CD8-positive, alpha-beta T cell (primary cell): ENCODE measurements at regions of chr1 and their contacts with region 1.

Region 1: GRCh38 chr1:44029906-44030604 is 1.2 kb downstream of the SLC6A9 start:
- DNase-seq: peak; percentile 57 to 90 (median 85)
- ATAC-seq: peak; percentile 78
- H3K4me3 ChIP-seq: peak overlapping the region; percentile 64 to 76
- H3K4me3 Mint-ChIP-seq: peak overlapping the region; percentile 97
- H3K27ac ChIP-seq: peak overlapping the region; percentile 51 to 60
- H3K27ac Mint-ChIP-seq: peak overlapping the region; percentile 95
- H3K4me1 ChIP-seq: peaks cover 12% of the 10 kb centered on the region
- H3K4me1 Mint-ChIP-seq: peaks cover 20% of the 10 kb centered on the region
- H3K27me3 ChIP-seq: no peaks in the 10 kb centered on the region
- H3K27me3 Mint-ChIP-seq: no peaks in the 10 kb centered on the region
- CTCF ChIP-seq: no peak

Region 2: DNA sequence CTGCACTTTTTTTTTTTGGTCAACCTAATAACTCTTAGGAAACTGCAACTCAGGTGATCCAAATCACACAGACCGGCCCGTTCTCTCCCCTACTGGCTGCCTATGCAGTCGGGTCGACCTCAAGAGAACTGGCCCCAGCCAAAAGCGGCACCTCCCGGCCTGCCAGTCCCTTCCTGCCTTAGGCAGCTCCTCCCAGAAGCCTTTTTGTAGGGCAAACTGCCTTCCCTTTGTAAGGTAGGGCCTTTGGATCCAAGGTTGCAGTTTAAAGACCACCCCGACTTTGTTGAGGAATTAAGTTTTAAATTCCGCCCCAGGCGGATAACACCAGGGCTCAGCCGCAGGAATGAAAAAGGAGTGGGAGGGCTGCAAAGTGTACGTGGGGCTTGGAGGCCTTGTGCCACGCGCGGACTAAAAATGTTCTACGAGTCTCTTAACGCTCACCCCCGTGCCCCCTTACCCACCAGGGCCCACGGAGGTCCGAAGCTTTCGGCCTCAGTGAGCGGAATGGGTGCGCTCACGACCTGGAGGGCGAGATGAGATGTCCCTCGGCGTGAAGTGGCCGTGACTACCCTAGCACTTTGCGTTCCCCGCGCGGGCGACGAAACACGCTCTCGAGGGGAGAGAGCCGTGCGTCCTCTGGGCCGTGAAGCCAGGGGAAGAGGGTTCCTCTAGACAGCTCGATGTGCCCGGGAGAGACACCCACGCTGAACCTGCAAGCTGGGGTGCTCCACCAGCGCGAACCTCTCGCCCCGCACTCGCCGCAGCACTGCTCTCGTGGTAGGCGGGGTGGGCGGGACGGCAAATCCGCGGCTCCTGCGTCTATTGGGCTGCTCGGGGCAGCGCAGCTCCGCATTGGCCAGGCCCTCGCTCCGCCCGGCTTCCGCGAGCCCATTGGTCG is 323.2 kb before region 1 on chr1:
- CTCF ChIA-PET with region 1: no interaction called
- POLR2A ChIA-PET with region 1: no interaction called
- intact Hi-C with region 1: loop called in 1 of 2 experiments (anchors 1 kb)
- DNase-seq: peak; percentile 74 to 94 (median 89)
- ATAC-seq: peak; percentile 98
- H3K4me3 ChIP-seq: peak overlapping the region; percentile 80 to 84
- H3K4me3 Mint-ChIP-seq: peak overlapping the region; percentile 87
- H3K27ac ChIP-seq: peak overlapping the region; percentile 46 to 58
- H3K27ac Mint-ChIP-seq: peak overlapping the region; percentile 81
- H3K4me1 ChIP-seq: peaks cover 13% of the 10 kb centered on the region
- H3K4me1 Mint-ChIP-seq: peaks cover 30% of the 10 kb centered on the region
- H3K27me3 ChIP-seq: no peaks in the 10 kb centered on the region
- H3K27me3 Mint-ChIP-seq: no peaks in the 10 kb centered on the region
- CTCF ChIP-seq: no peak

Region 3: DNA sequence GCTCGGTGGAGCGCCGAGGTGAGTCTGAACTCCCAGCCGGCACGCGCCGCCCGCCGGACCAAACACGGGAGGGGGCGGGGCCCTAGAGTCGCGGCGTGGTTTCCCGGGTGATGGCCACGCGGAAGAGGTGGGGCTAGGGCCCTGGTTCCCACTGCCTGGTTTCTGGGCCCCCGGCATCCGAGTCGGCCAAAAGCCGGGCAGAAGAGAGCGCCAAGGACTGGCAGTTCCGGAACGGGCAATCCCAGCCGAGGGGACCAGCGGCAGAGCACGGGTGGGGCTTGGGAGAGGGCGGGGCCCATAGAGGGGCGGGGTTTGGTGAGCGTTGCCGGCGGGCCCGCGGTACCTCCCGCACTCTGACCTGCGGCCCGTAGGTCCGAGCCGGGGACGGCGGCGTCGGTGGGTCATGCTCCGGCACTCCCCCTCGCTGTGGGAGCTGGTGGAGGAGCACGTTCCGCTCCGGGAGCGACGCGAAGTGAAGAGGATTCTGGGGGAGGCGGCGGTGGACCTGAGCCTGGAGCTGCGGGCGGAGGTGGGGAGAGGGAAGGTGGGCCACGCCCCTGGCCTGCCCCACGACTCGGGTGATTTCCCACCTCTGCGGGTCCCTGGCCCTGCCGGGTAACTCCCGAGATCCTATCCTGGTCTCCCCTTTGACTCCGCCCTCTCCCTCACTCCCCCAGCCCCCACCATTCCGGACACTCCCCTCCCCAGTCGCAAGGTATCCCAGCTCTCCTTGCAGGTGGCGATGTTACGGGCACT is 38.4 kb before region 1 on chr1 and contains the start of gene CCDC24:
- CTCF ChIA-PET with region 1: interaction called, 3 read pairs
- POLR2A ChIA-PET with region 1: no interaction called
- intact Hi-C with region 1: loop called (anchors 1 kb)
- DNase-seq: peak; percentile 43 to 85 (median 76)
- ATAC-seq: peak; percentile 81
- H3K4me3 ChIP-seq: peak within 1 kb of the TSS; percentile 74 to 81
- H3K4me3 Mint-ChIP-seq: peak within 1 kb of the TSS; percentile 90
- H3K27ac ChIP-seq: peak within 1 kb of the TSS; percentile 33 to 43
- H3K27ac Mint-ChIP-seq: peak within 1 kb of the TSS; percentile 72
- H3K4me1 ChIP-seq: peaks cover 12% of the 10 kb centered on the region
- H3K4me1 Mint-ChIP-seq: peaks cover 8% of the 10 kb centered on the region
- H3K27me3 ChIP-seq: no peaks in the 10 kb centered on the region
- H3K27me3 Mint-ChIP-seq: no peaks in the 10 kb centered on the region
- CTCF ChIP-seq: no peak
- total RNA-seq, gene CCDC24: 0.33 to 0.71 TPM

Region 4: DNA sequence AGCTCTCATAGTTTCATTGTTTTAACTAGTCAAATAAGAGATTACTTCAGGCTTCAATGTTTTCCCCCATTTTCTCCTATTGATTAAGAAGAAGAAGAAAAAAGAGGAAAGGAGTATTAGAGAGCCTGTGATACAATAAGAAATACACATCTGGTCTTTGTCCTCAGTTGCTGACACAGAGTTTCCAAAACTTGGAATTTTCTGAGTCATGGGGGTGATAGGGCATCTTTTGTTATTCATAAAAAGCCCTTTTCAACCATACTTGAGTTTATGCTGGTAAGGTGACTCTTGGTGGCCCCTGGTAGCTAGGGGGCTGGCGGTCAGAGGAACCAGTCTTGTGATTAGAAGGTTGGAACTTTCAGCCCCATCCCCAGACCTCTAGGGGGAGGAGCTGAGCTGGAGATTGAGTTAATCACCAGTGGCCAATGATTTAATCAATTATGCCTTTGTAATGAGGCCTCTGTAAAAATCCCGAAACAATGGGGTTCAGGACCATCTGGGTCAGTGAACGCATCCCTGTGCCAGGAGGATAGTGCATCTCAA is 140.3 kb after region 1 on chr1:
- CTCF ChIA-PET with region 1: no interaction called
- POLR2A ChIA-PET with region 1: no interaction called
- intact Hi-C with region 1: no loop called
- DNase-seq: no peak
- ATAC-seq: no peak
- H3K4me3 ChIP-seq: no peak overlapping the region
- H3K4me3 Mint-ChIP-seq: no peak overlapping the region
- H3K27ac ChIP-seq: no peak overlapping the region
- H3K27ac Mint-ChIP-seq: no peak overlapping the region
- H3K4me1 ChIP-seq: no peaks in the 10 kb centered on the region
- H3K4me1 Mint-ChIP-seq: no peaks in the 10 kb centered on the region
- H3K27me3 ChIP-seq: no peaks in the 10 kb centered on the region
- H3K27me3 Mint-ChIP-seq: peaks cover 18% of the 10 kb centered on the region
- CTCF ChIP-seq: no peak

Region 5: GRCh38 chr1:44354840-44355581 is 325.0 kb after region 1 on chr1 and contains the start of gene ERI3:
- CTCF ChIA-PET with region 1: no interaction called
- POLR2A ChIA-PET with region 1: no interaction called
- intact Hi-C with region 1: loop called in 1 of 2 experiments (anchors 10 kb)
- DNase-seq: peak; percentile 91 to 98 (median 96)
- ATAC-seq: peak; percentile 99
- H3K4me3 ChIP-seq: peak within 1 kb of the TSS; percentile 56 to 64
- H3K4me3 Mint-ChIP-seq: peak within 1 kb of the TSS; percentile 95
- H3K27ac ChIP-seq: peak within 1 kb of the TSS; percentile 37 to 60
- H3K27ac Mint-ChIP-seq: peak within 1 kb of the TSS; percentile 93
- H3K4me1 ChIP-seq: peaks cover 20% of the 10 kb centered on the region
- H3K4me1 Mint-ChIP-seq: peaks cover 38% of the 10 kb centered on the region
- H3K27me3 ChIP-seq: no peaks in the 10 kb centered on the region
- H3K27me3 Mint-ChIP-seq: no peaks in the 10 kb centered on the region
- CTCF ChIP-seq: no peak
- total RNA-seq, gene ERI3: 17.3 to 20.0 TPM